ENCODE measurements at regions of chr14 and their contacts with region 1.

Region 1: DNA sequence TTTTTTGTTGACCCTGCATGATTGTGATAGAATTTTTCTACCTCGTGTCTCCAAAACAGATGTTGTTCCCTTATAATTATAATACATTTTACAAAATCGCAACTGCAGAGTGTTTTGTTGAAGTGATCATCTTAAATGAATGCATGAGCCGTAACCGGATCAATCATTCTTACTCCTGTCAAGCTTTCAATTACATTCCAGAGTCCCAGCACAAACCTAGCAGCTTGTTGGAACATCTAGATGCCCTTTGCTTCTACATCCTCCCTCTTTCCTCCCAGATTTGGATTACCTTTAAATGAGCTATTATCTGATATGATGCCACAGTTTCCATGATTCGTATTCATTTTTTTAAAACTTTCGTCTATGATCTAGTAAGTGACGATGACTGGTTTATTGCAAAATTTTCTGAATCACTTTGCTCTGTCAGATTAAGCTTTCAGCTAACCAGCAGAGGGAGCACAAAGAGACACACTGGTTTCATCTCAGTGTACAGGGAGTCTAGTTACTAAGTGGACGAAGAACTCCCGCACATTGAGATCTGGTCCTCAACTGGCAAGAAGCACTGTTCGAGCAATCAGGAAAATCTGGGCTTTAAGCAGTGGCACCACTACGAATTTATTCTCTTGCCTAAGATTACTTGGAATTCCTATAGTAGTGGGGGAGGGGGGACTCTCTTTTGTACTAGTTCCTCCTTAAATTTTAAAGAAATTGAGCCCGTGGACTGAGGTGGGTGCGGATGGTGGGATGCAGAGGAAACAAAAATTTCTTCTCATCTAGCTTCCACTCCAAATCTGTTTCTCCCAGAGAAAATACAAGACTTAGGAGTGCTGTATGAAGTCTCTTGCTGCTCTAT is 40.9 kb downstream of the TSHR start:
- DNase-seq: no peak
- H3K4me3 ChIP-seq: no peak overlapping the region
- H3K27ac ChIP-seq: no peak overlapping the region
- H3K4me1 ChIP-seq: no peaks in the 10 kb centered on the region
- H3K27me3 ChIP-seq: peaks cover 0 to 1% (median 0%) of the 10 kb centered on the region in 3 donors
- CTCF ChIP-seq: peak; percentile 52 to 66 (median 59)
- EP300 ChIP-seq: no peak
- POLR2A ChIP-seq: no peak

Region 2: DNA sequence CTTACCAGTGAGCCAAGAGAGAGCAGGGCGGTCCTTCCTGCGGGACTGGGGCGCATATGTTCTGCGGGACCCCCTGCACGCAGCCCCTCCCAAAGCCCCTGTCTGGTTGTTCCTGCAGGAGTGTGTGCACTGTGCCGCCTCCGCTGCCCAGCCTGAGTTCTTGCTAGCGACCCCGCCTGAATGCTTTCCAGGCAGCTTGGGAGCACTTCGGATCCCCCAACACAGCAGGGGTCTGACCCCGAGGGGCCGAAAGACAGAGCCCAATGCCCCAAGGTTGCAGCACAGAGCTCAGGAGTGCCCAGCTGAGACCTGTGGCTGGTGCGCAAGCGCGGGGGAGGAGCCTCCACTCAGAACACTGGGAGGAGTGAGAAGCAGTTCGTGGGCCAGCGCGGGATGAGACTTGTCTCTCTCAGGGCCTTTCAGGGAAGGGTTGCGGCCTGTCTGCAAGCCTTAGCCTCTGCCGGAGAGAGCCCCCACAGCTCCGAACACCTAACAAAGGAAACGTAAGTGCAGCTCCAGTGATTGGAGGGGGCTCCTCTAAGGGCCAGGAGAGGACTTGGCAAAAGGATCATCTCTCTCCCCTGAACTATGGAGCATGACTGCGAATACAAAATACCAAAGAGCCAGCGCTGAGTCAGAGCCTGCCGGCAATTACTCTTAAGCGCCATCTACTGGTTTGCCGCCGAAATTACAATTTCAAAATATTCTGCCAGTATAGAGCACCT is 174.0 kb after region 1 on chr14:
- intact Hi-C with region 1: loop called (anchors 1 kb)
- DNase-seq: peak; percentile 97
- H3K4me3 ChIP-seq: peak overlapping the region; percentile 59 to 74 (median 68)
- H3K27ac ChIP-seq: peak overlapping the region; percentile 90 to 93 (median 92)
- H3K4me1 ChIP-seq: peaks cover 0 to 14% (median 9%) of the 10 kb centered on the region in 4 donors
- H3K27me3 ChIP-seq: no peaks in the 10 kb centered on the region
- CTCF ChIP-seq: peak; percentile 55 to 89 (median 85)
- EP300 ChIP-seq: no peak
- POLR2A ChIP-seq: peak; percentile 21 to 60

Region 3: DNA sequence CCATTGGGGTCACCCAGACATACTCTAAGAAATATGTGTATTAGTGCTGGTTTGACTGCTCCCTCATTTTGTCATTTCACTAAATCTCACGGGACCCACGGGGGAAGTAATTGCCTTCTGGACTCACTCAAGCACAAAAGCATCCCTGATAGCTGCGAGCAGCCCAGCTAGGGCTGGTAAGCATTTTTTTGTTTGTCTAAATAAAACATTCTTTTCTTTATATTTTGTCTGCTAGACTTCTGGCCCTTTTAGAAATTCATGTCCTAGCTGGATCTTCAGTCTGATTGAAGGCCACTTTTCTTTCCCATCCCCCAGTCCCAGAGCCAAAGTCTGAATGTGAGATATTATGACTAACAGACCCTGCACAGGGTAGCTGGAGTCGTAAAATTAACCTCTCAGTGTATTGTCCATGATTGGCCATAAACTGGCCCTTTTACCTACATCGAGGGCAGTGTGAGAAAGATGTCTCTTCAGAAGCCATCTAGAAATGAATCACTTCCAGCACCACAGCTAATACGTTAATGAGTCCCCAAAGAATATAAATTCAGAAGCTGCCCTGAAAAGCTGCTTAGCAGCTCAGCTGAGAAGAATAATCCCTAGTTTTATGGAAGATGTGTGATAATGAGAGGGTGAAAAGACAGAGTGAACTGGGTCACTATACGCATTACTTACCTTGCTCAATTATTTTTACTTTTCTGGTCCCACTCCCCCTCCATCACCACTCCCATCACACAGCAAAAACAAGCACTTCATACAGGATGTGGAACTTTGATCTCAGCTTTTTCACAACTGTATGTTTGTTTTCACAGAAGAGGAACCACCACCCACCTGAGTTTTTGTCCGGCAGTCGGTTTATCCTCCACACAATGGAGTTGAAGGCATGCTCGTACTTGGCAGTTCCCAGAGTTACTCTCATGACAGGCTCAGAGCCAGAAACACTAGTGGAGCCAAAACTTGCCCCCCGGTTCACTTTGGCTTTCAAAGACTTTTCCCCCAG is 280.1 kb after region 1 on chr14:
- intact Hi-C with region 1: no loop called
- DNase-seq: no peak
- H3K4me3 ChIP-seq: no peak overlapping the region
- H3K27ac ChIP-seq: no peak overlapping the region
- H3K4me1 ChIP-seq: no peaks in the 10 kb centered on the region
- H3K27me3 ChIP-seq: no peaks in the 10 kb centered on the region
- CTCF ChIP-seq: no peak
- EP300 ChIP-seq: no peak
- POLR2A ChIP-seq: no peak

Measured in sigmoid colon (tissue), 7 donors.